ENCODE measurements at regions of chr13 and their contacts with region 1.

Region 1: GRCh38 chr13:30145709-30146367 is 161.5 kb downstream of the KATNAL1 start:
- DNase-seq: peak in 1 of 2 donors; percentile 28
- ATAC-seq: no peak
- H3K4me3 ChIP-seq: no peak overlapping the region
- H3K4me3 Mint-ChIP-seq: peak overlapping the region; percentile 66
- H3K27ac ChIP-seq: peak overlapping the region; percentile 79
- H3K27ac Mint-ChIP-seq: peak overlapping the region; percentile 95 to 97
- H3K4me1 ChIP-seq: peaks cover 83% of the 10 kb centered on the region
- H3K4me1 Mint-ChIP-seq: peaks cover 91 to 93% of the 10 kb centered on the region in 2 donors
- H3K27me3 ChIP-seq: no peaks in the 10 kb centered on the region
- H3K27me3 Mint-ChIP-seq: no peaks in the 10 kb centered on the region
- CTCF ChIP-seq: no peak

Region 2: DNA sequence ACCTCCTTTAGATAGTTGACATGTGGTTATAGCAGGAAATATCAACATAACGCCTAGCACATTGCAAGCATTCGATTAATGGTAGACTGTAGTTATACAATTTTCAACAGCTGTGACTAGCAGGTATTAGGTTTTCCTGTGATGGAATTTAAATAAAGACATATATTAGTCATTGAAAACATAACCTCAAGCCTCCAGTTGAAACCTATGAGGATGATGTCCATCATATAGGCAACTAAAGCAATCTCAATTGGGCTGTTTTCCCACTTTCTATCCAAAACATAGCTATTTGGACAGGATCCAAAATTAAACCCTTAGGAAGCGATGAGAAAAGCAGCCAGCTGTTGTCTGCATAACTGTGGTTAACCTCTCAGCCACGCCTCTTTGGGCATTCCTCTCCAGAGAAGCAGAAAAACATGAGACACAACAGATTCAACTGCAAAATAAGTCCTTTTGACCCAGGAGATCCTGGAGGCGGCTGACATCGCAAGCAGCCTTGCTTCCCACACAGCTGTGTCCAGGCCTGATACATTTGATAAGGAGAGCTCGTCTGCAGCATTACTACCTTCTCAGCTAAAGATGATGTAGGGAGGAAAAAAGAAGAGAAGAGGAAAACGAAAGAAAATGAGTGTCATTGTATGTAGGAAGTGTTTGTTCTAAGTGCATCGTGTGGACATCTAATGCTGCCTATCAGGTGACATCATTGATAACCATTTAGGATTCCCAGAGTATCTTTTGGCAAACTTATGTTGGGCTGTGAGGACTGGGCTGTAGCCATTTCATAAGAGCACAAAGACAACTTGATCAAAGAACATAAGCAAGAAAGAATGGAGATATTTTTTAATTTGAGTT is 243.5 kb before region 1 on chr13:
- intact Hi-C with region 1: loop called (anchors 5 kb)
- DNase-seq: peak; percentile 52 to 78
- ATAC-seq: peak; percentile 85 to 94 (median 93)
- H3K4me3 ChIP-seq: peak overlapping the region; percentile 25
- H3K4me3 Mint-ChIP-seq: peak overlapping the region; percentile 93
- H3K27ac ChIP-seq: peak overlapping the region; percentile 73
- H3K27ac Mint-ChIP-seq: peak overlapping the region; percentile 81 to 93
- H3K4me1 ChIP-seq: peaks cover 22% of the 10 kb centered on the region
- H3K4me1 Mint-ChIP-seq: peaks cover 39 to 40% of the 10 kb centered on the region in 2 donors
- H3K27me3 ChIP-seq: peaks cover 4% of the 10 kb centered on the region
- H3K27me3 Mint-ChIP-seq: peaks cover 0 to 2% of the 10 kb centered on the region in 2 donors
- CTCF ChIP-seq: no peak

Region 3: DNA sequence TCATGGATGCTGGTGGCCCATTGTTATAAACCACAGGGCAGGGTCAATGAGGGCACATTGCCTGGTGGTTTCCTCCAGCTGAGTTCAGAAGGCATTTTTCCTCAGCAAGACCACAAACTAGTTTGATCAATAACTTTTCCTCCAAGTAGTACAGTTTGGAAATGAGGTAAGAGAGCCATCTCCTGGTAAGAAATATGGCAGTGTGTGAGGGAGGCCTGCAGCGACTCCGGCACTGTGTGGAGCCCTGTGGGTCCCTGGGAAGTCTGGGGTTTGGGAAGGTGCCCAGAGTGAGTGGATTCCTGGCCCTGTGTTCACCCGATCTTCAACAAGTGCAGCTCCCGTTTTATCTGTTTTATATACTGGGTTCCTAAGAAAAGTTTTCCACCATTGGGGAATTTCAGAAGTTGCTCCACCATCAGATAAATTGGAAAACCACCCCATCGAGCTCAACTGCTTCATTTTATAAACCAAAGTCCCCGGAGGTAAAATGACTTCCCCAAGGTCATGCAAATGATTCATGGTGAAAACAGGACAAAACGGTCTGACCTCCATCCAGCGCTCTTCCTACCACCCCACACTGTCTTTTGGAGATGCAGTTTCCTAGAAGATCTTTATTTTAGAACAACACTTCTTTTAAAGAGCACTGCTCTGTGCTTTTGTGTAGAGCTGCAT is 13.1 kb after region 1 on chr13:
- intact Hi-C with region 1: no loop called
- DNase-seq: peak in 1 of 2 donors; percentile 73
- ATAC-seq: peak; percentile 39 to 59 (median 55)
- H3K4me3 ChIP-seq: no peak overlapping the region
- H3K4me3 Mint-ChIP-seq: no peak overlapping the region
- H3K27ac ChIP-seq: no peak overlapping the region
- H3K27ac Mint-ChIP-seq: peak overlapping the region; percentile 74 to 95
- H3K4me1 ChIP-seq: peaks cover 55% of the 10 kb centered on the region
- H3K4me1 Mint-ChIP-seq: peaks cover 48 to 55% of the 10 kb centered on the region in 2 donors
- H3K27me3 ChIP-seq: no peaks in the 10 kb centered on the region
- H3K27me3 Mint-ChIP-seq: no peaks in the 10 kb centered on the region
- CTCF ChIP-seq: peak; percentile 51

Measured in natural killer cell (primary cell).